ENCODE measurements at regions of chr12 and their contacts with region 1.

Region 1: GRCh38 chr12:49740930-49741881 is at the start of gene TMBIM6:
- DNase-seq: peak; percentile 100
- H3K4me3 ChIP-seq: peak within 1 kb of the TSS; percentile 4 to 95 (median 56)
- H3K27ac ChIP-seq: peak within 1 kb of the TSS; percentile 78
- H3K4me1 ChIP-seq: peaks cover 11% of the 10 kb centered on the region
- H3K27me3 ChIP-seq: no peaks in the 10 kb centered on the region
- CTCF ChIP-seq: peak; percentile 94 to 96
- POLR2A ChIP-seq: peak; percentile 97
- total RNA-seq, gene TMBIM6: 393 and 395 TPM in 2 replicates

Region 2: GRCh38 chr12:49309391-49309790 is 431.8 kb before region 1 on chr12:
- CTCF ChIA-PET with region 1: no interaction called
- POLR2A ChIA-PET with region 1: no interaction called
- dilution Hi-C with region 1: no loop called
- intact Hi-C with region 1: no loop called
- DNase-seq: no peak
- H3K4me3 ChIP-seq: no peak overlapping the region
- H3K27ac ChIP-seq: no peak overlapping the region
- H3K4me1 ChIP-seq: no peaks in the 10 kb centered on the region
- H3K27me3 ChIP-seq: peaks cover 13 to 21% of the 10 kb centered on the region in 2 experiments
- CTCF ChIP-seq: no peak
- POLR2A ChIP-seq: no peak

Region 3: DNA sequence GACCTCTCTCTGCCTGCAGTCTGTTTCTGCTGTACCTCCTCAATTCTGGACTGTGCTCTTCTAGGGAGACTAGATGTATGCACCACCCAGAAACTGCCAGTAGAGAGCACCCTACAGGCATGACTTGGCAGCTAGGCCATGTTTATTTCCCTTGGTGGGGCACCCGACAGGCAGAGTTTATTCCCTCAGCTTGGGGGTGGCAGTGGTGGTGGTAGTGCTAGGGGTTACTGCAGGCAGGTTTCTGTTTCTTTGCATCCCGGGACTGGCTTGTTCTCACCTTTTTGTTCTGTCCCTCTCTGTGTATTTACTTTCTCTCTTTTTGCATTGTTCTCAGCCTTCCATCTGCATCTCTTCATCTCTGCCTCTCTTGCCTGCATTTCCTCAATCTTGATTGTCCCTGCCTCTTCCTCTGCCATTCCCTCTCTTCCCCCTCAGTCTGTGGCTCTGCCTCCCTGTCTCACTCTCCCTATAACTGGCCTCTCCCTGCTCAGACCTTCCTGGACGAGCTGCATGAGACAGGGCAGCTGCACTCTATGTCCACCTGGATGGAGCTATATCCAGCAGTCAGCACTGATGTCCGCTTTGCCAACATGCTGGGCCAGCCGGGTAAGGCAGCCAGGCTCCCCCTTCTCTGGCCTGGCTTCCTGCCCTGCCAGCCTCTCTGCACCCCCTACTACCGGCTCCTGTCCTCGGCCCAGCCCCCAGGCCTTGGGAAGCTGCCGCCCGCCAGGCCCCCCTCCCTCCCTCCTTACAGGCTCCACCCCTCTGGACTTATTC is 104.0 kb before region 1 on chr12:
- CTCF ChIA-PET with region 1: interaction called, 25 read pairs
- POLR2A ChIA-PET with region 1: interaction called, 4 read pairs
- dilution Hi-C with region 1: no loop called
- intact Hi-C with region 1: loop called (anchors 1 kb)
- DNase-seq: peak; percentile 76
- H3K4me3 ChIP-seq: no peak overlapping the region
- H3K27ac ChIP-seq: peak overlapping the region; percentile 48
- H3K4me1 ChIP-seq: peaks cover 12% of the 10 kb centered on the region
- H3K27me3 ChIP-seq: no peaks in the 10 kb centered on the region
- CTCF ChIP-seq: peak; percentile 73 to 76
- POLR2A ChIP-seq: no peak

Region 4: DNA sequence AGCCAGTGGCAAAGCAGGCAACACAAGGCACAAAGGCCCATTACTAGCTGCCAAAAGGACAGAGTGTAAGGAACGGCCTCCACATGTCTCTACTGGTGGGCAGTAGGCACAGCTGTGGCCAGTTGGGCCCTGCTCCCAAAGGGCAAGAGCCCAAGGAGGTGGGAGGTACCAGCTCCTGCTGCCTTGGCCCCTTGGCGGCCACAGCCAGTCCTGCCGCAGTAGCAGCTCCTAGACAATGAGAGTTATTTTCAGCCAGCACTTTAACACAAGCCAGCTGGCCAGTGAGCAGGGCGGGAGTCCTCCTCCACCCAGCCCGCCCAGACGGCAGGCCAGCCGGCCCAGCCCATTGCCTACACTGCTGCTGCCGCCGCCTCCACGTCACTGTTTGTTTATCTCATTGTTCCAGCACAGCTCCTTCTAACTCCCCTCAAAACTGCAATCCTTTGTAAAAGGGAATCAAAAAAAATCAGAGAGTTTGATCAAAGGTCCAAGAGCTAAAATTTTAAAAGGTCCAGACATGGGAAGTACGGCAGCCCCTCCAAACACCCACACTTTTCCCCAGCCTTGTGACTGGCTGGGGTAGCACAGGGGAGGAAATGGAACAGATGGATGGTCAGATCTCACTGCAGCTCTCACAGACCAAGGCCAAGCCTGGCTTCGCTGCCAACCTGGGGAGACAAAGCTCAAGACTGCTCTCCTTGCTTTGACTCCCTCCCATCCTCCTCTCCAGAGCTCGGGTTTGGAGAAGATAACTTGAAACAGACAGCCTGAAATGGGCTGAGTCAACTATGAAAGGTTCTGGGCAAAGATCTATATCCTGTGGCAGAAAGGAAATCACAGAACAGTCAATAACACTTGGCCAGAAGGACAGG is 67.5 kb before region 1 on chr12:
- CTCF ChIA-PET with region 1: interaction called, 20 read pairs
- POLR2A ChIA-PET with region 1: interaction called, 13 read pairs
- dilution Hi-C with region 1: no loop called
- intact Hi-C with region 1: loop called (anchors 2 kb)
- DNase-seq: peak; percentile 98
- H3K4me3 ChIP-seq: no peak overlapping the region
- H3K27ac ChIP-seq: peak overlapping the region; percentile 91
- H3K4me1 ChIP-seq: peaks cover 45% of the 10 kb centered on the region
- H3K27me3 ChIP-seq: no peaks in the 10 kb centered on the region
- CTCF ChIP-seq: peak; percentile 21 to 49
- POLR2A ChIP-seq: no peak

Region 5: DNA sequence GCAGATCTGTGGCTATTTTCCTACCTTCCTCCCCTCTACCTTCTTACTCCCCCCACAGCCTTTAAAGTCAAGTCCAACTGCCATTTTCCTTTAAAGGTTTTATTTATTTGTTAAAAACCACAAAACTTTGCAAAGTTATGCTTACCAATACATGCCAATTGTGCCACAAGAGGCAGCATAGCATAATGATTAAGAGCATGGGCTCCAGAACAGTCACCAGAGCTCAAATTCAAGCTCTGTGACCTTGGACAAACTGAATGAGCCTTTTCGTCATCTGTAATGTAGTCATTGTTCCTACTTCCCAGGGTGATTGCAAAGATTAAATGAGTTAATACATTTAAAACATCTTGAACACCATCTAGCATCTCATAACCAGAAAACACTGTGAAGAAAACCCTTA is 21.0 kb before region 1 on chr12:
- CTCF ChIA-PET with region 1: interaction called, 27 read pairs
- POLR2A ChIA-PET with region 1: interaction called, 4 read pairs
- dilution Hi-C with region 1: no loop called
- intact Hi-C with region 1: no loop called
- DNase-seq: no peak
- H3K4me3 ChIP-seq: no peak overlapping the region
- H3K27ac ChIP-seq: no peak overlapping the region
- H3K4me1 ChIP-seq: no peaks in the 10 kb centered on the region
- H3K27me3 ChIP-seq: peaks cover 9 to 17% of the 10 kb centered on the region in 2 experiments
- CTCF ChIP-seq: no peak
- POLR2A ChIP-seq: no peak

Region 6: DNA sequence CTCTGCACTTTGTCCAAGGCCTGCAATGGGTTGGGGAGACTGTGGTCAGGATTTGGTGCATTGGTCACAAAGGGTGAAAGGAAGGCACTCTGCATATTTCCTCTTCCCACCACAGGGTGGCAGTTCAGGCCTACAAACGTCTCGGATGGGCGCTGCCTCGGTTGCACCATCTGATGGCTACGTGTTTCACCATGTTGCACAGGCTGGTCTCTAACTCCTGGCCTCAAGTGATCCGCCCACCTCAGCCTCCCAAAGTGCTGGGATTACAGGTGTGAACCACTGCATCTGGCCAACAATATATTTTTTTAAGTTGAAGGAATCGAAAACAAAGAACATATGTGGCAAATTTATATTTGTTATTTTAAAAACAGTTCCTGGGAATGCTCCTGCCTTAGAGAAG is 35.2 kb after region 1 on chr12:
- CTCF ChIA-PET with region 1: interaction called, 11 read pairs
- POLR2A ChIA-PET with region 1: no interaction called
- dilution Hi-C with region 1: no loop called
- intact Hi-C with region 1: no loop called
- DNase-seq: peak; percentile 68
- H3K4me3 ChIP-seq: no peak overlapping the region
- H3K27ac ChIP-seq: no peak overlapping the region
- H3K4me1 ChIP-seq: no peaks in the 10 kb centered on the region
- H3K27me3 ChIP-seq: peaks cover 0 to 2% of the 10 kb centered on the region in 2 experiments
- CTCF ChIP-seq: peak; percentile 77 to 79
- POLR2A ChIP-seq: no peak